Mammary epithelial cell (primary cell): ENCODE measurements at regions of chr5 and their contacts with region 1.

Region 1: GRCh38 chr5:81751009-81751835 is at the start of gene SSBP2:
- DNase-seq: peak; percentile 99
- H3K4me3 ChIP-seq: peak within 1 kb of the TSS; percentile 82 to 96 (median 90)
- H3K27ac ChIP-seq: peak within 1 kb of the TSS; percentile 81
- H3K4me1 ChIP-seq: peaks cover 36% of the 10 kb centered on the region
- H3K27me3 ChIP-seq: no peaks in the 10 kb centered on the region
- CTCF ChIP-seq: no peak
- total RNA-seq, gene SSBP2: 24.8 to 40.8 TPM

Region 2: GRCh38 chr5:81425569-81425968 is 325.7 kb before region 1 on chr5:
- CTCF ChIA-PET with region 1: no interaction called
- dilution Hi-C with region 1: no loop called
- in situ Hi-C with region 1: no loop called
- intact Hi-C with region 1: loop called (anchors 2 kb)
- DNase-seq: peak; percentile 27
- H3K4me3 ChIP-seq: no peak overlapping the region
- H3K27ac ChIP-seq: no peak overlapping the region
- H3K4me1 ChIP-seq: peaks cover 7% of the 10 kb centered on the region
- H3K27me3 ChIP-seq: no peaks in the 10 kb centered on the region
- CTCF ChIP-seq: peak; percentile 44 to 48

Region 3: DNA sequence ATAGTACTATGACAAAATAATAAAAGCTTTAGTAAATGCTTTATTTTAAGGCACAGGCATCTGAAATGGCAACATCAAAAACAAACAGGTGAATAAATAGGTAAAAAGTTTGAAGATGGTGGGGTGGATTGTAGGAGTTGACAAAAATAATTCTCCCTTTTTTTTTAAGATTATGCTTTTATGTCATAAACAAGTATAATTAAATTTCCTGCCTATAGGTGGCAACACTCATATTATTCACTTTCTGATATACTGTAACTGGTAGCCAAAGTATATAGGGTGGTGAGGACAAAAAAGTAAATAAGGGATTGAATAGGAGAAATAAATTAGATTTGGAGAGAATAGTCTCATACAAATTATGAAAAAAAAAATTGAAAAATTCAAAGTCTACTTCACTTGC is 237.2 kb before region 1 on chr5:
- CTCF ChIA-PET with region 1: interaction called, 4 read pairs
- dilution Hi-C with region 1: no loop called
- in situ Hi-C with region 1: no loop called
- intact Hi-C with region 1: loop called (anchors 2 kb)
- DNase-seq: no peak
- H3K4me3 ChIP-seq: no peak overlapping the region
- H3K27ac ChIP-seq: no peak overlapping the region
- H3K4me1 ChIP-seq: no peaks in the 10 kb centered on the region
- H3K27me3 ChIP-seq: no peaks in the 10 kb centered on the region
- CTCF ChIP-seq: peak; percentile 29 to 34

Region 4: DNA sequence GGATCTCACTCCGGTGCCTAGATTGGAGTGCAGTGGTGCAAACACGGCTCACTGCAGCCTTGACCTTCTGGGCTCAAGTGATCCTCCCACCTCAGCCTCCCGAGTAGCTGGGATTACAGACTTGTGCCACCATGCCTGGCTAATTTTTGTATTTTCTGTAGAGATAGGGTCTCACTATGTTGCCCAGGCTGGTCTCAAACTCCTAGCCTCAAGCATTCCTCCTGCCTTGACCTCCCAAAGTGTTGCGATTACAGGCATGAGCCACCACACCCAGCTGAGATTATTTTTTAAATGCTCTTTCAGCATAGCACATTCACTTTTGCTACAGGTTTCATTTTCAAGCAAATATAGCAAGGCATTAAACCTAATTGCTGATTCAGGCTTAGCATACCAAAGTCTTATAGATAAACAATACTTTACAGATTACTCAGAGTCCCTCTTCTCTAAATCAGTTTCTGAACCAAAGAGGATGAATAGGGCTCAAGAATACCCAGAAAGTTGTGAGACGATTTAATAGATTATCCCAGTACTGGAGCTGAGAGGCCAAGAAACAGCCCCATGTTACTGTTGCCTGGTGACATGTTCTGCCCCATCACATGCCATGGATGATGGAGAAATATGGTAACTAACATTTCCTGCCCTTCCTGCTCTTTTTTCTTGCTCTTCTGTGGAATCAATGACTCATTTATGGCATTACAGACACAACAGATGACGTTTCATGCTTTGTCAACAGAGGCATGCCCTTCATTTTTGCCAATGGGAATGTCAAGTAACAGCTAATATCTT is 17.6 kb after region 1 on chr5:
- CTCF ChIA-PET with region 1: no interaction called
- dilution Hi-C with region 1: no loop called
- in situ Hi-C with region 1: no loop called
- intact Hi-C with region 1: loop called (anchors 2 kb)
- DNase-seq: peak; percentile 90
- H3K4me3 ChIP-seq: no peak overlapping the region
- H3K27ac ChIP-seq: peak overlapping the region; percentile 82
- H3K4me1 ChIP-seq: peaks cover 13% of the 10 kb centered on the region
- H3K27me3 ChIP-seq: no peaks in the 10 kb centered on the region
- CTCF ChIP-seq: no peak

Region 5: GRCh38 chr5:81851481-81852178 is 100.4 kb after region 1 on chr5:
- CTCF ChIA-PET with region 1: interaction called, 4 read pairs
- dilution Hi-C with region 1: no loop called
- in situ Hi-C with region 1: loop called in 1 of 2 experiments (anchors 5 kb)
- intact Hi-C with region 1: loop called (anchors 1 kb)
- DNase-seq: peak; percentile 84
- H3K4me3 ChIP-seq: peak overlapping the region; percentile 30 to 36 (median 36)
- H3K27ac ChIP-seq: no peak overlapping the region
- H3K4me1 ChIP-seq: peaks cover 44% of the 10 kb centered on the region
- H3K27me3 ChIP-seq: no peaks in the 10 kb centered on the region
- CTCF ChIP-seq: no peak

Region 6: DNA sequence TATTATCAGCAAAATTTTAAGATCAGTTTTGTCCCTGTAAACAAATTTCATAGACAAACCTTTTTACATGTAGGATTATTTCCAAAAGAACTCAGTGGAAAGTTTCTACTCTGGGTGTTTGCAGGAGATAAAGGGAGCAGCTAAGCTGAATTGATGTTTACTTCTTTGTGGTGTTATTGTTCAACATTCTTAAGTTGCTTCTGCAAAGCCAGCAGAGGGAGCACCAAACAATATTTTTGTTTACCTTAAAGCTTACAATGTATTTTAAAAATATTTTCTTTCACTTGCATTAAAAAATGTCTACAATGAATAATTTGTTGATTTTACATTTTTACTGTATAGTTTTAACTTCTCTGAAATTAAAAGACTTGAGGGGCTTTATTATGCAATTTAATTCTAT is 356.0 kb after region 1 on chr5:
- CTCF ChIA-PET with region 1: no interaction called
- dilution Hi-C with region 1: no loop called
- in situ Hi-C with region 1: no loop called
- intact Hi-C with region 1: loop called (anchors 1 kb)
- DNase-seq: no peak
- H3K4me3 ChIP-seq: no peak overlapping the region
- H3K27ac ChIP-seq: no peak overlapping the region
- H3K4me1 ChIP-seq: peaks cover 11% of the 10 kb centered on the region
- H3K27me3 ChIP-seq: no peaks in the 10 kb centered on the region
- CTCF ChIP-seq: peak; percentile 18 to 52